Right ventricle myocardium superior (tissue), 1 donor: ENCODE measurements at regions of chr6 and their contacts with region 1.

Region 1: GRCh38 chr6:81752138-81752920 is at the start of gene TENT5A:
- DNase-seq: peak; percentile 96
- ATAC-seq: peak; percentile 86
- total RNA-seq, gene TENT5A: 53.5 TPM

Region 2: DNA sequence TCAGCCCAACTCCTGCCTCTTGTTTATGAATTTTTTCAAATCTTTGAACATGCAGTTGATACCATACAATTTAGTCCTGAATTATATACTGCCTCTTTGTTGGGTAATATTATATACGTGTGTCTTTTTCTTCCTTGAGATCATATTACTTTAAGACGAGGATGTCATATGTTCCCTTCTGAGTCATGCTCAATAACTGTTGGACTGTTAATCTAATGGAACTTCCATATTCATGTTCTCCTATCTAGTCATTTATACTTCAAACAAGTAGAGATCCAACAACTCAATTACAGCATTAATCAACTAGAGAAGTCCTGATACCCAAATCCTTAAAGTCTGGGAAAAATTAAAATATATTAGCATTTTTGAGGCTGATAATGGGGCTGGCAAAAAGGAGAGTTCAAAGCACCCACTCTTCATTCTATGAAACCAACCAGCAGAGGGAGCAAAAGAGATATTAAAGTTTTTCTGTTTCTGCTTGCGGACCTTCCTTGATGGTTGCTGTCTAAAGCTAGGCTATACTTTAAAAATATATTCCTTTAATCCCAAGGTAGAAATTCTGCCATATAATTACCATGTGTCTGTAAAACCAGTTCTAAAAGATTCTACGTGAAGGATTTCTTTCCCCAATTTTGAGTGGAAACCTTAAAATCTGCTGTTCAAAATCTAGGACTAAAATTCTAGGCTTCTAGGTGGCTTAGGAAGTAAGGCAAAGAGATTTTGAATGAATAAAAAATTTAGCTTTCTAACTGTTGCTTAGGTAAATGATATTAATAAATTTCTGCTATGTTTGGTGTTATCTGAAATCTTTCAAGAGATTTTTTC is 1147.0 kb before region 1 on chr6:
- intact Hi-C with region 1: loop called (anchors 10 kb)
- DNase-seq: no peak
- ATAC-seq: peak; percentile 73

Region 3: GRCh38 chr6:81465859-81466258 is 286.5 kb before region 1 on chr6:
- intact Hi-C with region 1: no loop called
- DNase-seq: no peak
- ATAC-seq: no peak

Region 4: GRCh38 chr6:81900616-81901015 is 148.3 kb after region 1 on chr6:
- intact Hi-C with region 1: loop called (anchors 5 kb)
- DNase-seq: no peak
- ATAC-seq: no peak

Region 5: GRCh38 chr6:82006027-82006738 is 253.9 kb after region 1 on chr6:
- intact Hi-C with region 1: loop called (anchors 10 kb)
- DNase-seq: no peak
- ATAC-seq: peak; percentile 80